GM10248 (cell line): ENCODE measurements at regions of chr17 and their contacts with region 1.

Region 1: DNA sequence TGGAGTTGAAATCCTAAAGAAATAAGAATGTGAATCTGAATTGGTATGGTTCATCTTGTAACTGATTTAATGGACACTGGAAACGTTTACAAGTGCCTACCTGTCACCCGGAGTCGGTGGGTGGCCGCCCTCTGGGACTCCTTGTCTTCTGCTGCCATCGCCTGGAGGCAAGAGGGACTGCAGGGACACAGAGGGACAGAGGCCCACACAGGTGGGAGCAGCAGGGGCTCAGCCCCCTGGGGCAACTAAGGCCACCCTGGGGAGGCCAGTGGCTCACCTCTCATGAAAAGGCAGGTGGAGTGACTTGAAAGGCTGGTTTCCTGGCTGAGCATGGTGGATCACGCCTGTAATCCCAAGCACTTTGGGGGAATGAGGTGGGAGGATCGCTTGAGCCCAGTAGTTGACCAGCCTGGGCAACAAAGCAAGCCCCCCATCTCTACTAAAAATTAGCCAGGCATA is 23.2 kb downstream of the TMEM92 start:
- DNase-seq: peak; percentile 82
- CTCF ChIP-seq: peak; percentile 98

Region 2: DNA sequence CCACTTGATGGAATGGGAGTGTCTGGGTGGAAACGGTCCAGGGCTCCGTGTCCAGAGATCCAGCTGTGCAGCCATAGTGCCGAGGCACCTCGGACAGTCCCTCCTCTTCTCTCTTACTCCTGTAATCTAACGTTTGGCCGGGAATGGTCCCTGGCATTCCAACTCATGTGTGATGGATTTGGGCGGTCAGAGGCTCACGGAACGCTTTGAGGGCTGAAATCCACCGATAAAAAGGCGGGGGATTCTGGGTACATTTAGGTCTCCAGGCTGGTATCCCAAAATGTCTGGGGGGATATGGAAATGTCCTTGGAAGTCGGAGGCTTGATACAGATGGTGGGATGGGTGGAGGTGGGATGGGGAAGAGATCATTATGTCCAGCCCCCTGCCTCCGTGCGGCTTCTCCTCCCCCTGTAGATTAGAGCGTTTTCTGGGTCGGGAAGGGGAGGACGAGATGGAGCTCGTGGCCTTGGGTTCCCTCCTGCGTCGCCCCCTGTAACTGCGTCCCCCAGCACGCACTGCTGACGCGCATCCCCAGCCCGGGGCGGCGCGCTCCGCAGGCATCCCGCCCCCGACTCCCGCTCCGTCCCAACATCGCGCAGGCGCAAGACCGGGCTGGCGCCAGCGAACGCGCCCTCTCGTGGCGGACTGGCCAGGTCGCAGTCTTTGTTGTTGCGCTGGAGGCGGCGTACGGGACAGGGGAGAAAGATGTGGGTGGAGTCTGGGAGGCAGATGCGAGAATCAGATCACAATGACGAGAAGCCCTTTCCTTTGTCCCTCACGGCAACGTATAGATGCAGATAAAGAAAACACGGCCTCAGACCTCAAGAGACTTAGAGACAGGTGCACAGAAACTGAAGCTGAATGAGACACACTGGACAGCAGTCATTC is 136.2 kb before region 1 on chr17:
- CTCF ChIA-PET with region 1: interaction called, 11 read pairs
- POLR2A ChIA-PET with region 1: no interaction called
- DNase-seq: peak; percentile 99
- CTCF ChIP-seq: peak; percentile 93

Region 3: GRCh38 chr17:50177983-50178834 is 119.2 kb before region 1 on chr17:
- CTCF ChIA-PET with region 1: interaction called, 16 read pairs
- POLR2A ChIA-PET with region 1: no interaction called
- DNase-seq: peak; percentile 77
- CTCF ChIP-seq: peak; percentile 78

Region 4: DNA sequence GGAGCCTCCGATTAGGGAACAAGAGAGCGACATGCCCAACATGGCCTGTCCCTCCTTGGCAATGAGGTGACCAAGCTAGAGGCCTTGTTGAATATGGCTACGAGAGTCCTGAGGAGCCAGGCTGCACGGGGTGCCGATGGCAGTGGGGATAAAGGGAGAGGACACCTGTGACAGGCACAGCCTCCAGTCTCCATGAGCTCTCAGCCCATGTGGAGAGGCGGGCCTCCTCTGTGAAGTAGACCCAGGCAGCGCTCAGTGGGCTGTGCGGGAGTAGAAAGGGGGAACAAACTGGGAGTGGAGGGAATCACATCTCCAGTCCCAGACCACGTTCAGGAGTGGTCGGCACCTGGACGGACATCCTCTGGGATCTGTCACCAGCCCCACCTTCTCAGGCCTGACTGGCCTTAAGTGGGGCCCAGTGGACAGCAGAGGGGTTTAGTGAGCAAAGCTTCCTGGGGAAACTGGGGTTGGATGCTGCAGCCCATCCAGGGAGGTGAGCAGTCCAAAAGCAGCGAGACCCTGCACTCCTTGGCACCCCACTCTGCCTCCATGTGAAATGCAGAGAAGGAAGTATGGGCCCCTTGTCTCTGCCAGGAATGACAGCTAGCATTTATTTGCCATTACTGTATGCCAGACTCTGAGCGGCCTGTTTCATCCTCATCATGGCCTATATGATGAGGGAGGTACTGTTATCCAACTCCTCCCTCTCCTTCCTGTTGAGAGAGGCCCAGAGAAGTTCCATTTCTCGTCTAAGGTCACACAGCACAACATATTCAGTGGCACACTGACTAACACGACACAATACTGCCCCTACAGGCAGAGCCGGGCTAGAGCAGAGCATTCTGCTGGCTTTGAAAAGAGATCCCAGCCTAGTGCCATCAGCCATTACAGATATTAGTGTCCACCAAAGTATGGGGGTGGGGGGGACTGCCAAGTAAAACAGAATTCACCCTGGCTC is 27.7 kb before region 1 on chr17:
- CTCF ChIA-PET with region 1: interaction called, 30 read pairs
- POLR2A ChIA-PET with region 1: no interaction called
- DNase-seq: peak; percentile 74
- CTCF ChIP-seq: peak; percentile 73

Region 5: GRCh38 chr17:50312308-50312707 is 14.9 kb after region 1 on chr17:
- CTCF ChIA-PET with region 1: interaction called, 22 read pairs
- POLR2A ChIA-PET with region 1: no interaction called
- DNase-seq: no peak
- CTCF ChIP-seq: no peak